ENCODE measurements at regions of chr20 and their contacts with region 1.

Region 1: GRCh38 chr20:46139908-46140482 is 21.9 kb downstream of the CD40 start:
- DNase-seq: no peak
- ATAC-seq: no peak

Region 2: DNA sequence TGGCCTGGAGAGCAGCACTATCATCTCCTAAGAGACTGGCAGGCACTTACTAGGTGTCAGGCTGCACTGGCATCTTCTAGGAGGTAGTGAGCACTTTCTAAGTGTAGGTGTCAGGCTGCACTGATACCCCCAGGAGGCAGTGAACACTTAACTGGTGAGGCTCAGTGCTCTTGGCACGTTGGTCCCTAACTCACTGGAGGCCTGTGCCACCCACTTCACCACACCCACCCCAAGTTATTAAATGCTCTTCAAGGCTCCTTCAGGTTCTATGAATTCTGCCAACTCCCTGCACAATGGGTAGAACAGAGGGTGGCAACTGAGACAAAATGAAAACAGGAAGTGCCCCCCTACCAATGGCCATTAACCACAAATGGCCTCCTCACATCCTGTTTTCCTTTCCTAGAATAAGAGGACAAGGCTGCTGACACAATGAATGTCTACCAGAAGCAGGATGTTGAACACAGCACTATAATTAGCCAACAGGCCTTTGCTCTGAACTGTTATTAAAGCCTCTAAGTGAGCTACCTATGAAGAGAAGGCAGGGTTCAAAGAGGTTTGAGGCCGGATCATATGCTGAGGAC is 79.6 kb before region 1 on chr20:
- intact Hi-C with region 1: no loop called
- DNase-seq: no peak
- ATAC-seq: peak in 1 of 2 donors; percentile 21

Region 3: GRCh38 chr20:46179863-46180262 is 39.9 kb after region 1 on chr20:
- intact Hi-C with region 1: loop called in 1 of 2 experiments (anchors 5 kb)
- DNase-seq: peak; percentile 33
- ATAC-seq: no peak

Measured in left cardiac atrium (tissue), 4 donors.